ENCODE measurements at regions of chr6 and their contacts with region 1.

Region 1: DNA sequence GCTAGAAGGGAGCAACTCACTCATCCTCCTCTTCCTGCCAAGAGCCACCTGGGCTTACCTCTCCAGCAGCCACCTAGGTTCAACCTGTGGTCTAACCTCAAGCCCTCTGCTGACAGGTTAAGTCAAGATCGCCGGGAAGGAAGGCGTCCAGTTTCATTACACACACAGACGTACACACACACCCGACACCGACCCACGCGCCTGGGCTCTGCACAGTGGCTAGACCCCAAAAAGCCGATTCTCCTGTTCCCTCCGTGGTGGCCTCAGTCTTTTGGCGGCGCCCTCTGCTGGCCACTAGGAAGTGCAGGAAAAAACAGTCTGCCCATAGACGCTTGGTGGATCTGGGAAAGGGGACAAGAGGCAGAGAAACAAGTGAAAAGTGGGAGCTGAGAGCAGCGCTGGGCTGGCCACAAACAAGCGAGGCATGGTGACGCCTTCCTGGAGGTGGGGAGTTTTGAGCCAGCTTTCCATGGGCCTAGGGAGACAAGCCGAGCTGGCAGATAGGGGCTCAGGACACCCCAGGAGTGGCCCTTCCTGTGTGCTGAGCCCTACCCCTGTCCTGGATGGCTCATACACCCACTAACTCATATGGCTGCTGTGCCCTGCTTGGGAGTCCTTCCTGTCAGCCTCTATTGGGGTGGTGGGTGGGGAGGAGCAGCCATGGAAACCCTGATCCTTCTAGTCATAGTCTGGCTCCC is 52.7 kb downstream of the MRPL14 start:
- DNase-seq: no peak
- ATAC-seq: peak; percentile 72
- H3K4me3 ChIP-seq: peak overlapping the region; percentile 38 to 59
- H3K27ac ChIP-seq: peak overlapping the region; percentile 31; the same call in 1 of the 2 replicates
- H3K4me1 ChIP-seq: peaks cover 16 to 36% of the 10 kb centered on the region in 2 experiments
- H3K27me3 ChIP-seq: no peaks in the 10 kb centered on the region
- CTCF ChIP-seq: peak in 2 of 3 experiments; percentile 87 to 96; a peak in 4 of 6 replicates
- POLR2A ChIP-seq: peak; percentile 7
- RAD21 ChIP-seq: no peak

Region 2: GRCh38 chr6:43045371-43045930 is 1029.1 kb before region 1 on chr6:
- CTCF ChIA-PET with region 1: no interaction called
- POLR2A ChIA-PET with region 1: no interaction called
- RAD21 ChIA-PET with region 1: no interaction called
- intact Hi-C with region 1: no loop called
- DNase-seq: no peak
- ATAC-seq: no peak
- H3K4me3 ChIP-seq: no peak overlapping the region
- H3K27ac ChIP-seq: no peak overlapping the region
- H3K4me1 ChIP-seq: no peaks in the 10 kb centered on the region
- H3K27me3 ChIP-seq: no peaks in the 10 kb centered on the region
- CTCF ChIP-seq: no peak
- POLR2A ChIP-seq: no peak
- RAD21 ChIP-seq: no peak

Region 3: GRCh38 chr6:43608310-43608763 is 466.3 kb before region 1 on chr6:
- CTCF ChIA-PET with region 1: interaction called, 4 read pairs
- POLR2A ChIA-PET with region 1: no interaction called
- RAD21 ChIA-PET with region 1: no interaction called
- intact Hi-C with region 1: loop called (anchors 1 kb)
- DNase-seq: peak; percentile 73
- ATAC-seq: peak; percentile 87
- H3K4me3 ChIP-seq: no peak overlapping the region
- H3K27ac ChIP-seq: no peak overlapping the region
- H3K4me1 ChIP-seq: peaks cover 0 to 5% of the 10 kb centered on the region in 2 experiments; a peak in 1 of 4 replicates
- H3K27me3 ChIP-seq: no peaks in the 10 kb centered on the region
- CTCF ChIP-seq: peak; percentile 68 to 90 (median 85)
- POLR2A ChIP-seq: no peak
- RAD21 ChIP-seq: peak; percentile 76

Region 4: DNA sequence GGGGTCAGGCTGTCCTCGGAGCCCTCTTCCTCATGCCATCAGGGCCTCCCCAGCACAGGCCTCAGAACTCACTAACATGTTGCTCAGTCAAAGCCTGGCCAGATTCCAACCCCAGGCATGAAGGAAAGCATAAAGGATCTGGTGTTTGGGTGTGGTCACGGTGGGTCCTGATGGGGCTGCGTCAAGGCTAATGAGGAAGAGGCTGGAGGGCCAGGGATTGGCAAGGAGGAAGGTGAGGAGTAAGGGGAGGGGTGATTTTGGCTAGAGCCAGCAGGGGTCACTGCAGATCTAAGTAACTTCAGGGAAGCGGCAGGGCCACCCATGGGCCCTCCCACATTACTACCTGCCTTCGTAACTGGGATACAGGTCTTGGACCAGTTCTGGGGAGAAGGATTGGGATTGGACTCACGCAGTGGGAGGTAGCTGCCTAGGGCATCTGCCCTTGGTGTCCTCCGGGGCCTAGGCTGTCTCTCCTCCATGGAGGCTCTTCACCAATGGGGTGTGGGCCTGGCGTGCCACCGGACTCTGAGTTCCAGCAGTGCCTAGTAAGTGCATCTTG is 350.8 kb before region 1 on chr6:
- CTCF ChIA-PET with region 1: interaction called, 14 read pairs
- POLR2A ChIA-PET with region 1: interaction called, 3 read pairs
- RAD21 ChIA-PET with region 1: interaction called in 1 of 2 experiments, 4 read pairs
- intact Hi-C with region 1: loop called (anchors 1 kb)
- DNase-seq: peak; percentile 79
- ATAC-seq: peak; percentile 96
- H3K4me3 ChIP-seq: no peak overlapping the region
- H3K27ac ChIP-seq: no peak overlapping the region
- H3K4me1 ChIP-seq: peaks cover 23 to 27% of the 10 kb centered on the region in 2 experiments
- H3K27me3 ChIP-seq: no peaks in the 10 kb centered on the region
- CTCF ChIP-seq: peak; percentile 67 to 80 (median 77)
- POLR2A ChIP-seq: no peak
- RAD21 ChIP-seq: peak; percentile 86

Region 5: DNA sequence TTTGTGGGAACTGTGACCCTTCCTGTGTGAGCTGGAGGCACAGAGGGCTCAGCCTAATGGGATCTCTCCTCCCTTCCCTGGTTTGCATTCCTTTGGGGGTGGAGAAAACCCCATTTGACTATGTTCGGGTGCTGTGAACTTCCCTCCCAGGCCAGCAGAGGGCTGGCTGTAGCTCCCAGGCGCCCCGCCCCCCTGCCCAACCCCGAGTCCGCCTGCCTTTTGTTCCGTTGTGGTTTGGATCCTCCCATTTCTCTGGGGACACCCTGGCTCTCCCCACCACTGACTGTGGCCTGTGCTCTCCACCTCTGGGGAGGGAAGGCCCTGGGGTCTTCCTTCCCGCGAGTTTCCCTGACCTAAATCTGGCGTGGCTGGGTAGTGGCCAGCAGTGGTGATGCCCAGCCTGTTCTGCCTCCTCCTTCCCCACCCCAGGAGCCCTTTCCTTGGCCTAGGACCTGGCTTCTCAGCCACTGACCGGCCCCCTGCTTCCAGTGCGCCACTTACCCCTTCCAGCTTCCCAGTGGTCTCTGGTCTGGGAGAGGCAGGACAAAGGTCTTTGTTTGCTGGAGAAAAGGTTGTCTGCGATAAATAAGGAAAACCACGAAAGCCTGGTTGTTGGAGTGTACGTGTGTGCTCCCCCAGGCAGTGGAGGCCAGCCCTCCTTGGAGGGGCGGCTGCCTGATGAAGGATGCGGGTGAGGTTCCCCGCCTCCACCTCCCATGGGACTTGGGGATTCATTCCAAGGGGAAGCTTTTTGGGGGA is 299.6 kb before region 1 on chr6:
- CTCF ChIA-PET with region 1: interaction called, 51 read pairs
- POLR2A ChIA-PET with region 1: interaction called, 17 read pairs
- RAD21 ChIA-PET with region 1: interaction called, 10 to 11 read pairs
- intact Hi-C with region 1: no loop called
- DNase-seq: no peak
- ATAC-seq: peak; percentile 21
- H3K4me3 ChIP-seq: no peak overlapping the region
- H3K27ac ChIP-seq: peak overlapping the region; percentile 58
- H3K4me1 ChIP-seq: peaks cover 38 to 43% of the 10 kb centered on the region in 2 experiments
- H3K27me3 ChIP-seq: no peaks in the 10 kb centered on the region
- CTCF ChIP-seq: peak in 2 of 3 experiments; percentile 77 to 84; a peak in 4 of 6 replicates
- POLR2A ChIP-seq: no peak
- RAD21 ChIP-seq: no peak

Region 6: GRCh38 chr6:43926634-43927524 is 147.7 kb before region 1 on chr6:
- CTCF ChIA-PET with region 1: interaction called, 5 read pairs
- POLR2A ChIA-PET with region 1: no interaction called
- RAD21 ChIA-PET with region 1: interaction called in 1 of 2 experiments, 3 read pairs
- intact Hi-C with region 1: loop called (anchors 10 kb)
- DNase-seq: peak; percentile 72
- ATAC-seq: peak; percentile 44; the same call in 1 of the 2 replicates
- H3K4me3 ChIP-seq: no peak overlapping the region
- H3K27ac ChIP-seq: no peak overlapping the region
- H3K4me1 ChIP-seq: peaks cover 11 to 13% of the 10 kb centered on the region in 2 experiments; a peak in 3 of 4 replicates
- H3K27me3 ChIP-seq: no peaks in the 10 kb centered on the region
- CTCF ChIP-seq: no peak
- POLR2A ChIP-seq: no peak
- RAD21 ChIP-seq: 0 out of 2 replicates have a peak, but pooled peaks have one; percentile 24

Region 7: DNA sequence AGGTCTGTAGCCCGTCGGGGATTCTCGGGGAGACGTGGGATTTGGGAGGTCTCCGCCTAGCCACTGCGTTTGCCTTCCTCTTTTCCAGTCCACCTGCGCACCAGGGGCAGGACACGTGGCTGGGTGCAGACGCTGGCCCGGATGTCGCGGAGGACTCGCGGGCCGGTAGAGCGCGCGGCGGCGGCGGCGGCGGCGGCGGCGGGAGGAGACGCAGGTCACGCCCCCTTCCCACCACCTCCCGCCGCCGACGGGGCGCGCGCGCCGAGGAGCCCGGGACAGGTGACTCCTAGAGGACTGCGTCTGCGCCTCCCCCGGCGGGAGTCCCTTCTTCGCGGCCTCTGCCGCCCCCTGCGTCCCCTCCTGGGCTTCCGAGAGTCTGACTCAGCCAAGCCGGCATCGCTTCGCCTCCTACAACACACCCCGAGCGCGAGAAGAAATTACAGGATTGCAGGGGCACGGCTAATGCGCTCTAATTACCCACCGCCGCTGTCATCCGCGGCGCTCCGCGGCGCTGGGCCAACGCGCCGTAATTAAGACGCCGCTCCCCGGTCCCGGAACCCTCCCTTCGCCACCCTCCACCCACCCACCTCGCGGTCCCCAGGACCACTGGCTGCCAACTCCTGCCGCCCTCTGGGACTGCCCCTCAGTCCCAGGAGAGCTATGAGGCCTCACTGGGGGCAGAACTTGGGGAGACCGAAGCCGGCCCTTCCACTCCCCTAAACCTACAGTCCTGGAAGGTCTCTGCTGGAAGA is 71.8 kb before region 1 on chr6:
- CTCF ChIA-PET with region 1: interaction called, 4 read pairs
- POLR2A ChIA-PET with region 1: interaction called, 3 read pairs
- RAD21 ChIA-PET with region 1: interaction called in 1 of 2 experiments, 3 read pairs
- intact Hi-C with region 1: loop called (anchors 2 kb)
- DNase-seq: no peak
- ATAC-seq: peak; percentile 40
- H3K4me3 ChIP-seq: peak overlapping the region; percentile 58 to 64
- H3K27ac ChIP-seq: peak overlapping the region; percentile 89
- H3K4me1 ChIP-seq: peaks cover 35 to 66% of the 10 kb centered on the region in 2 experiments
- H3K27me3 ChIP-seq: no peaks in the 10 kb centered on the region
- CTCF ChIP-seq: 0 out of 6 replicates have a peak, but pooled peaks of 1 of the 3 experiments have one; percentile 9
- POLR2A ChIP-seq: no peak
- RAD21 ChIP-seq: no peak

Region 8: DNA sequence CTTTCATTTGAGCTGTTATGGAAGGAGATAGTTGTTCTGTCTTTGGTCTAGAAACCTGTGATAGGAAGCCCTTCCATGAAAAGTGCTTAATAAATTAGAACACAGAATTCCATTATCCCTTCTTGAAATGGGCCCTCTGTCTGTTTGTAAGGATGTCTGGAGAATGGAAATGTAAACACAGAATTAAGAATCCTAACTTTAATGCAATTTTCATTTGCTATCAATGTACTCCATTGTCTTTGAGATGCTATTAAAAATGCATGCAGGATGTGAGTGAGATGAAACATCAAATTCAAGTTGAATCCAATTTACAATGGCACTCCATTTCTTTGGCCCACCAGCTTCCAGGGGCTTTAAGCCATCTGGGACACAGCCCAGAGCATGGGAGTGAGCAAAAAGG is 252.5 kb after region 1 on chr6:
- CTCF ChIA-PET with region 1: no interaction called
- POLR2A ChIA-PET with region 1: no interaction called
- RAD21 ChIA-PET with region 1: no interaction called
- intact Hi-C with region 1: no loop called
- DNase-seq: no peak
- ATAC-seq: no peak
- H3K4me3 ChIP-seq: no peak overlapping the region
- H3K27ac ChIP-seq: no peak overlapping the region
- H3K4me1 ChIP-seq: no peaks in the 10 kb centered on the region
- H3K27me3 ChIP-seq: peaks cover 10% of the 10 kb centered on the region; the same call in 1 of the 2 replicates
- CTCF ChIP-seq: no peak
- POLR2A ChIP-seq: no peak
- RAD21 ChIP-seq: no peak

Measured in HCT116 (cell line).